Activated CD4-positive, alpha-beta T cell treated with anti-CD3 and anti-CD28 coated beads for 36 hours (primary cell): ENCODE measurements at regions of chr11 and their contacts with region 1.

Region 1: GRCh38 chr11:93741094-93741881 is at the starts of genes C11orf54 and TAF1D:
- DNase-seq: peak; percentile 97
- ATAC-seq: peak; percentile 80
- H3K4me3 Mint-ChIP-seq: peak within 1 kb of the TSS; percentile 99
- H3K27ac Mint-ChIP-seq: peak within 1 kb of the TSS; percentile 98
- H3K4me1 Mint-ChIP-seq: peaks cover 38% of the 10 kb centered on the region
- H3K27me3 Mint-ChIP-seq: no peaks in the 10 kb centered on the region
- total RNA-seq, gene C11orf54: 13.8 to 15.7 TPM
- total RNA-seq, gene TAF1D: 326 to 355 TPM

Region 2: GRCh38 chr11:93197380-93198214 is 543.7 kb before region 1 on chr11 and contains the start of gene SLC36A4:
- CTCF ChIA-PET with region 1: no interaction called
- POLR2A ChIA-PET with region 1: interaction called, 3 read pairs
- intact Hi-C with region 1: loop called (anchors 1 to 5 kb)
- DNase-seq: peak; percentile 94
- ATAC-seq: peak; percentile 92
- H3K4me3 Mint-ChIP-seq: peak within 1 kb of the TSS; percentile 94
- H3K27ac Mint-ChIP-seq: peak within 1 kb of the TSS; percentile 97
- H3K4me1 Mint-ChIP-seq: peaks cover 19% of the 10 kb centered on the region
- H3K27me3 Mint-ChIP-seq: peaks cover 1% of the 10 kb centered on the region
- total RNA-seq, gene SLC36A4: 13.9 to 16.1 TPM

Region 3: GRCh38 chr11:93662177-93662575 is 79.1 kb before region 1 on chr11:
- CTCF ChIA-PET with region 1: interaction called, 3 read pairs
- POLR2A ChIA-PET with region 1: interaction called, 11 read pairs
- intact Hi-C with region 1: loop called (anchors 1 kb)
- DNase-seq: no peak
- ATAC-seq: no peak
- H3K4me3 Mint-ChIP-seq: peak overlapping the region; percentile 94
- H3K27ac Mint-ChIP-seq: peak overlapping the region; percentile 95
- H3K4me1 Mint-ChIP-seq: peaks cover 44% of the 10 kb centered on the region
- H3K27me3 Mint-ChIP-seq: no peaks in the 10 kb centered on the region

Region 4: GRCh38 chr11:93689240-93689639 is 52.0 kb before region 1 on chr11:
- CTCF ChIA-PET with region 1: interaction called, 3 read pairs
- POLR2A ChIA-PET with region 1: interaction called, 3 read pairs
- intact Hi-C with region 1: loop called (anchors 1 to 2 kb)
- DNase-seq: peak; percentile 74
- ATAC-seq: peak; percentile 99
- H3K4me3 Mint-ChIP-seq: peak overlapping the region; percentile 44
- H3K27ac Mint-ChIP-seq: peak overlapping the region; percentile 90
- H3K4me1 Mint-ChIP-seq: peaks cover 22% of the 10 kb centered on the region
- H3K27me3 Mint-ChIP-seq: no peaks in the 10 kb centered on the region

Region 5: DNA sequence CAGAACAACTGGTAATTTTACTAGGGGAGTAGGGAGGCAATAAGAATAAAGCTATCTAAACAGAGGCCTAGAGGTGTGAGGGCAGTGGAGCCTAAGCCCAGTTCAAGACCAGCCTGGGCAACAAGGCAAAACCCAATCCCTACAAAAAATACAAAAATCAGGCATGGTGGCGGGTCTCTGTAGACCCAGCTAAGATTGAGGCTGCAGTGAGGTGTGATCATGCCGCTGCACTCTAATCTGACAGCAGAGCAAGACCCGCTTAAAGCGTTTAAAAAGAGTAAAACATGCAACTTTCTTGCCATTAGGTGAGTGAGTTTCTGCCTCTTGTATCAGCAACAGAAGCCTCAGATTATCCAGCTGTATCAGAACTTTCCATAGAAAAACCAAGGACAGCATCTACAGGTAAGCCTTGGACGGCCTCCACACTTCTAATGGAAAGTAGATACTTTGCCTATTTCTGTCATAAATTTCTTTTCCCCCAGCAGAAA is 12.1 kb before region 1 on chr11:
- CTCF ChIA-PET with region 1: interaction called, 5 read pairs
- POLR2A ChIA-PET with region 1: interaction called, 4 read pairs
- intact Hi-C with region 1: loop called (anchors 1 kb)
- DNase-seq: no peak
- ATAC-seq: no peak
- H3K4me3 Mint-ChIP-seq: no peak overlapping the region
- H3K27ac Mint-ChIP-seq: peak overlapping the region; percentile 53
- H3K4me1 Mint-ChIP-seq: peaks cover 13% of the 10 kb centered on the region
- H3K27me3 Mint-ChIP-seq: no peaks in the 10 kb centered on the region

Region 6: GRCh38 chr11:94493281-94494125 is 752.2 kb after region 1 on chr11 and contains the starts of genes ANKRD49 and MRE11:
- CTCF ChIA-PET with region 1: no interaction called
- POLR2A ChIA-PET with region 1: interaction called, 4 read pairs
- intact Hi-C with region 1: loop called (anchors 1 kb)
- DNase-seq: peak; percentile 97
- ATAC-seq: peak; percentile 100
- H3K4me3 Mint-ChIP-seq: peak within 1 kb of the TSS; percentile 94
- H3K27ac Mint-ChIP-seq: peak within 1 kb of the TSS; percentile 97
- H3K4me1 Mint-ChIP-seq: peaks cover 24% of the 10 kb centered on the region
- H3K27me3 Mint-ChIP-seq: no peaks in the 10 kb centered on the region
- total RNA-seq, gene ANKRD49: 20.8 to 22.4 TPM
- total RNA-seq, gene MRE11: 36.8 to 51.3 TPM